OCI-LY7 (cell line): ENCODE measurements at regions of chr6 and their contacts with region 1.

Region 1: DNA sequence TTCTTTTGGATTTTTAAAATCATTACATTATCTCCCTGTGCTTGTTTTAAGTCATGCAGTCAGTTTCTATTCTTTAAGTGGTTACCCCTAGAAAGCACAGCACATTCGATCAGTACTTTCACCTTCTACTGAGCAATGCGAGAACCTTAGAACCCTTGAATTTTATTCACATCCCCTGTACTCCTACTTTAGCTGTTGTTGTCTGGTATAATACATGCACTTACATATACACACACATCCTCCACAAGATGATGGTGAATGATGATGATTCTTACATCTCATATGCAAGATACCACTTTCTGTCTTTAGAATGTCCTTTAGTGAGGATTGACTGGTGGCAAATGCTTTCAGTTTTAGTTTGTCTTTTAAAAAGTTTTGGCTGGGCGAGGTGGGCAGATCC is 5.7 kb downstream of the CDC40 start:
- DNase-seq: no peak
- H3K4me3 ChIP-seq: peak overlapping the region; percentile 52
- H3K27ac ChIP-seq: peak overlapping the region; percentile 7
- H3K4me1 ChIP-seq: peaks cover 49% of the 10 kb centered on the region
- CTCF ChIP-seq: no peak

Region 2: DNA sequence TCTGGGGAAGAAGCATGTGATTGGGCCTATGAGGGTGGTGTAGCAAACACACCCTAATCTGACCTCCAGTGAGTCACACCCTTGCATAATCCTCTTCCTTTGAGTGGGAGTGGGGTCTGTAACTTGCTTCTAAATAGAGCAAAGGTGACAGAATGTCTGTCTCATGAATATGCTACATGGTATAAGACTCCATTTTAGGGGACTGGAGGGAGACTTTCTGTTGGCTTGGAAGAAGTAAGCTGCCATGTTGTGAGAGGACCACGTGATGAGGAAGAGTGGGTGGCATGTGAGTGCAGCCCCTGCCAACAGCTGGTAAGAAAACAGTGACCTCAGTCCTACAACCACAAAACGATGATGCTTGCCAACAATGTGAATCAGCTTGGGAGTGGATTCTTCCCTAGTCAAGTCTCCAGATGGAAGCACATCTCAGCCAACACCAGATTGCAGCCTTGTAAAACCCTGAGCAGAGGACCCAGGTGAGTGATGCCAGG is 498.6 kb before region 1 on chr6:
- CTCF ChIA-PET with region 1: no interaction called
- POLR2A ChIA-PET with region 1: no interaction called
- intact Hi-C with region 1: no loop called
- DNase-seq: no peak
- H3K4me3 ChIP-seq: no peak overlapping the region
- H3K27ac ChIP-seq: no peak overlapping the region
- H3K4me1 ChIP-seq: peaks cover 14% of the 10 kb centered on the region
- CTCF ChIP-seq: no peak

Region 3: GRCh38 chr6:109894181-109894580 is 291.7 kb before region 1 on chr6:
- CTCF ChIA-PET with region 1: no interaction called
- POLR2A ChIA-PET with region 1: no interaction called
- intact Hi-C with region 1: no loop called
- DNase-seq: peak; percentile 14
- H3K4me3 ChIP-seq: no peak overlapping the region
- H3K27ac ChIP-seq: no peak overlapping the region
- H3K4me1 ChIP-seq: no peaks in the 10 kb centered on the region
- CTCF ChIP-seq: no peak

Region 4: DNA sequence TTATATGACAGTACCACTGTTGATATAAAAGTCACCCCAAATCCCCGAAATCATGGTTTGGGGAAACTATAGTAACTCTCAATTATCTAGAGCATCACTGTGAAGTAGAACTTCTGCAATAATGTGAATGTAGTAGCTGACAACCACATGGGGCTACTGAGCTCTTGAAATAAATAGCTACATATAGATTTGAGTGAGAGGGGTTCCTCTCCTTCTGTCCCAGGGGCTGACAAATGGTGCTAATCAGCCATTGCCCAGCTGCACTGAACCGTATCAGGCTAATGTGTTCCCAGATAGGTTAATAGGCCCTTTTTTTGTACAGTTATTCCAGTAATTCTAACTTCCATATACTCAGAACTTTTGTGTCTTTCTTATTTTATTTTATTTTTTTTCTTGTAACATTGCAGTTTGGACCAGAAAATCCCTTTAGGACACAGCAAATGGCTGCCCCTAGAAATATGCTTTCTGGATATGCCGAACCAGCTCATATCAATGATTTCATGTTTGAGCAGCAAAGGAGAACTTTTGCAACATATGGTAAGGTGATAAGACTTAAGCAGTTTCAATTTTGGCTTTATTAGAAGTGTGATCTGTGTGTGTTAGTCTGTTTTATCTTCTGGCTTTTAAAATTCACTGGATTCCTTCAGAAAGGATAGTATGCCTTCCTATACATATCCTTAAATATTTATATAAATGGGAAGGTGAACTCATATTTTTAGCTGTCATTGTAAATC is 15.4 kb after region 1 on chr6:
- CTCF ChIA-PET with region 1: interaction called, 20 read pairs
- POLR2A ChIA-PET with region 1: interaction called, 55 read pairs
- intact Hi-C with region 1: no loop called
- DNase-seq: no peak
- H3K4me3 ChIP-seq: no peak overlapping the region
- H3K27ac ChIP-seq: no peak overlapping the region
- H3K4me1 ChIP-seq: peaks cover 48% of the 10 kb centered on the region
- CTCF ChIP-seq: no peak

Region 5: GRCh38 chr6:110207652-110208051 is 21.8 kb after region 1 on chr6:
- CTCF ChIA-PET with region 1: interaction called, 20 read pairs
- POLR2A ChIA-PET with region 1: interaction called, 55 read pairs
- intact Hi-C with region 1: no loop called
- DNase-seq: no peak
- H3K4me3 ChIP-seq: no peak overlapping the region
- H3K27ac ChIP-seq: no peak overlapping the region
- H3K4me1 ChIP-seq: peaks cover 42% of the 10 kb centered on the region
- CTCF ChIP-seq: no peak